Astrocyte of the cerebellum (primary cell): ENCODE measurements at regions of chr18 and their contacts with region 1.

Region 1: DNA sequence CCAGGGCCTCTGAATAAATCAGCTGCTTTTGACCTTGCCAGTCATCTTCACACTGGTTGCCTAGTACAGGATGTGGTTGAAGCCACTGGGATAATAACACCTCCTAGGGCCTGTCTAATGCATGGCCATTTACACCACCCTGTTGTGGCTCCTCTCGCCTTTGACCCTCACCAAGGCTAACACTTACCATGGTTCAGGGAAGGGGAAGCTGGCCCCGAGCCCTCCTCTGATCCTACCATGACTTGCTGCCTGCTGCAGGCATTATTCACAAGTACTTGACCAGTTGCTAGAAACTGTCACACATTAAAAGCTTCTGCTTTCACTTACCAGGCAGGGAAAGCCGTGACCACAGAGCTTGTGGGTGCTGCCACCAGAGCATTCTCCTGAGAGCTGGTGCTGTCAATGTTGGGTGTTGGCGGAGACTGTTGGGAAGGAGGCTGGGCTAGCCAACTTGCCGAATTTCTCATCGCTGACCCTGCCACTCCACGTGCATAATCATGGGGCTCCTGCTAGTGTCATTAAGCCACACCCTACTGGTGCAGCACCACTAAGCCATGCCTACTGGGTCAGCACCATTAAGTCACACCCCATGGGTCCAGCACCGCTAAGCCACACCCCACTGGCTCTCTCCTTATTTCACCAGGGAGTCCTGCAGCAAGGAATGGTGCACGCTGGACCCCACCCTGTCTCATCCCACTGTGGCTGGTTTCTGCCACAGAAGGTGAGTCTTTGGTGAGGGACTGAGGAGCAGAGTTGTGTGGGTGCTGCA is 47.0 kb upstream of the TTC39C start:
- DNase-seq: no peak
- H3K4me3 ChIP-seq: no peak overlapping the region
- CTCF ChIP-seq: no peak

Region 2: DNA sequence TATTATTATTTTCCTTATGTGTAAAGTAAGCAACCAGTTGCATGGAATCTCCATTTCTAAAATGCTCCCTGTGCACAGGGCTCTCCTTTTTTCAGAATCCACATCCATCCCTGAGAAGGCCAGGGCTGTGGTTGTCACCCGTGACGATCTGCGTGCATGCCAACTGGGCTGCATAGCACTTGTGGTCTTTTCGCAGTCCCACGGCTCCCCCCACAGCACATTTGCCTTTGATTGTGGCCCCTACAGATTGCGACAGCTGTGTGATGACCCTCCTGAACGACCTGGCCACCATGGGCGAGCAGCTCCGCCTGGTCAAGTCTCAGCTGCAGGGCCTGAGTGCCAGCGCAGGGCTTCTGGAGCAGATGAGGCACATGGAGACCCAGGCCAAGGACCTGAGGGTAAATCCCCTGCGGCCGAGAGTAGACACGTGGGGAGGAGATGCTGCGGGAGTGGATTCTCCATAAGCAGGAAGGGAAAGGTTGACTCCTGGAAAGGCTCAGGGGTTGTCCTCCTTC is 72.8 kb before region 1 on chr18:
- in situ Hi-C with region 1: loop called (anchors 5 kb)
- DNase-seq: no peak
- H3K4me3 ChIP-seq: no peak overlapping the region
- CTCF ChIP-seq: no peak

Region 3: DNA sequence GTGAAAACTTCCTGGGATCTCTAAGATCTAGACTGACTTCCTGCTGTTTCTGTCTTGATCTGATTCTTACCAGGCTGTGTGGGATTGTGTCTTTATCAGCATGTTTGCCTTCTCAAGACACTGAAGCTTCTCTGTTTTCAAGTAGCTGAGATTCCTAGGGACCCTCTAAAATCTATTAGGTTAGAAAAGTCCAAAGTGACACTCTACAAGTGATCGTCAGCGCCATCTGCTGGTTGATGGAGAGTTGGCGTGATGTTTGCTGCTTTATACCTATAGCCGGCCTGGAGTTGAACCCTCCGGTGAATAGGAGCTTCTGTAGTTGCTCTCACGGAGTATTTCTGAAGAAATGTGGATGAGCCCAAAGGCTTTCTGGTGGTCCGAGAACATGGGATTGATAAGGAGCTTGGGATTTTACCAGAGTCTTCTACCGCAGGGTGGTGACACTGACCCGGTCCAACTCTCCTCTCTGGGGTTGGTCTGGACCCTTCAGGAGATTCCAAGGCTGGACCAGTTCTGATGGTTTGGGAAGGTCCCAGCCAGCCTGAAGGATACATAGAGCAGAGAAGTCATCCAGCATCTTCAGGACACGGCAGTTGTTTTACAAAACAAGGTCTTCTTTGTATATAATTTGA is 49.0 kb before region 1 on chr18:
- in situ Hi-C with region 1: no loop called
- DNase-seq: peak; percentile 49
- H3K4me3 ChIP-seq: no peak overlapping the region
- CTCF ChIP-seq: peak; percentile 93